PC-9 (cell line): ENCODE measurements at regions of chr10 and their contacts with region 1.

Region 1: DNA sequence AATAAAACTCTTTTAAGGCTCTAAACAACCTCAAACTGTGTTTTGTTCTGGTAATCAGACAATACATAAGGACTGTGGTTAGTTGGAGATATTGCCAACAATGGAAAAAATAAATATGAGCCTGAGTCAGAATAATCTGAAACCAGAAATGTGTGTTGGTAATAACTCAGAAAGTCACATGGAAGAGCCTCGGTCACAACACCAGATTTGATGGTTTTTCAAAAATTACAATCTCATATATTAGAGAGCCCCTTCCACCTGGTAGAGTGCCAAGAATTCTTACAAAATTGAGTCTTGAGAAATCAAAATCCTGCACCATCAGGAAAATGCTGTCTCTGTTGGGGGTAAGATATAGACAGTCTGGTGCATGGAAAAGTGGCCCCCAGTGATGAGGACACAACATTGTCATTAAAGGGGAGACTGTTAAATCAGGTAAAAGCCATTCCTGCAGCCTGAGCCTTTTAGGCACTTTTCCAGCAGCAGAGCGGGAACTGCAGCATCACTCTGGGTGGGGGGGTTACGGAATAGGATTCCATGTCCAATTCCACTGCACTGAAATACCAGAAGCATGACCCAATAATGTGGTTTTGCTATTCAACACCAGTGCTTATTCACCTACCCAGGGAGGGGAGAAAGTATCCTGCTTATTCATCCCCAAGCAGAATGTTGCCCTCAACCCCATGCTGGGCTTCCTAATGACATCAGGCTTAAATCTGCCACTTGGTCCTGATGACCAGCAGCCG is 9.5 kb upstream of the ADAM12 start:
- DNase-seq: peak; percentile 71 to 93
- H3K4me3 ChIP-seq: no peak overlapping the region
- H3K27ac ChIP-seq: peak overlapping the region; percentile 81
- H3K4me1 ChIP-seq: peaks cover 24% of the 10 kb centered on the region
- H3K27me3 ChIP-seq: no peaks in the 10 kb centered on the region
- CTCF ChIP-seq: no peak

Region 2: GRCh38 chr10:126433351-126433750 is 35.5 kb after region 1 on chr10:
- CTCF ChIA-PET with region 1: no interaction called
- POLR2A ChIA-PET with region 1: no interaction called
- intact Hi-C with region 1: loop called (anchors 1 kb)
- DNase-seq: peak; percentile 73 to 88
- H3K4me3 ChIP-seq: no peak overlapping the region
- H3K27ac ChIP-seq: peak overlapping the region; percentile 85
- H3K4me1 ChIP-seq: peaks cover 23% of the 10 kb centered on the region
- H3K27me3 ChIP-seq: no peaks in the 10 kb centered on the region
- CTCF ChIP-seq: no peak

Region 3: GRCh38 chr10:126576336-126576735 is 178.5 kb after region 1 on chr10:
- CTCF ChIA-PET with region 1: no interaction called
- POLR2A ChIA-PET with region 1: no interaction called
- intact Hi-C with region 1: no loop called
- DNase-seq: no peak
- H3K4me3 ChIP-seq: no peak overlapping the region
- H3K27ac ChIP-seq: no peak overlapping the region
- H3K4me1 ChIP-seq: no peaks in the 10 kb centered on the region
- H3K27me3 ChIP-seq: no peaks in the 10 kb centered on the region
- CTCF ChIP-seq: no peak

Region 4: DNA sequence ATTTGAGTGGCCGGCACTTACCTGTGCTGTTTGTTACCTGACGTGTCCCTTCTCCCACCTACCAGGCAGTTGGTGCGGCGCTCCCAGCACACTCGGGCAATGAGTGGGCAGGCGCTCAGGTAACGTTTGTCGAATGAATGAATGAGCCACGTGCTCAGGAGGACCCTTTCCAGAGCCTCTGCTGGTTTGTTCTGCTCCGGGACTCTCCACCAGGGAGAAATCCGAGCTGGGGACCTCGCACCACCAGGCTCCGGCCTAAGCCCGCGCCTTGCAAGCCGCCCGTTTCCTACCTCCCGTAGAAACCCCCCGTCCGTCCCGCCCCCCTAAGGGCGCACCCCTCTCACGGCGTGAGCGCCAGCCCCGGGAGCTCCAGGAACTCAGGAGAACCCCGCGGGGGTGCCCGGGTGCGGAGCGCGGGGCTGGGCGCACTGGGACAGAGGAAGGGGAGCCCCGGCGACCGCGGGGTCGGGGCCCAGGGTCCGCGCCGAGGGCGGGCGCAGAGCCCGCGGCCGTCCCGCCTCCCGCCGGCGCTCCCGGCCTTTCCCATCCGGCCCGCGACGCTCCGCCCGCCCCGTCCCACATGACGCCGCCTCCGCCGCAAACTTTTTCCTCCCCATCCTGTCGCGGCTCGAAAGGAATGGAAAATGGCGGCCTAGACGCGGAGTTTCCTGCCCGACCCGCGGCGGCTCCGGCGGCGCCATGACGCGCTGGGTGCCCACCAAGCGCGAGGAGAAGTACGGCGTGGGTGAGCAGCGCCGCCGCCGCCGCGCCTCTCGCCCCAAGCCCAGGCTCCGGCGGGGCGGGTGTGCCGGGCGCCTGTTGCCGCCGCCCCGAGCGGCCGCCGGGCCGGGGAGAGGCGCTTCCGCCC is 507.2 kb after region 1 on chr10 and contains the start of gene DOCK1:
- CTCF ChIA-PET with region 1: no interaction called
- POLR2A ChIA-PET with region 1: no interaction called
- intact Hi-C with region 1: loop called (anchors 10 kb)
- DNase-seq: peak in 1 of 2 experiments; percentile 52
- H3K4me3 ChIP-seq: peak within 1 kb of the TSS; percentile 73
- H3K27ac ChIP-seq: no peak within 1 kb of the TSS
- H3K4me1 ChIP-seq: peaks cover 27% of the 10 kb centered on the region
- H3K27me3 ChIP-seq: no peaks in the 10 kb centered on the region
- CTCF ChIP-seq: no peak
- total RNA-seq, gene DOCK1: 21.4 and 24.8 TPM in 2 replicates

Region 5: GRCh38 chr10:128000471-128001362 is 1602.9 kb after region 1 on chr10:
- CTCF ChIA-PET with region 1: no interaction called
- POLR2A ChIA-PET with region 1: no interaction called
- intact Hi-C with region 1: loop called (anchors 10 kb)
- DNase-seq: peak in 1 of 2 experiments; percentile 30
- H3K4me3 ChIP-seq: no peak overlapping the region
- H3K27ac ChIP-seq: no peak overlapping the region
- H3K4me1 ChIP-seq: no peaks in the 10 kb centered on the region
- H3K27me3 ChIP-seq: no peaks in the 10 kb centered on the region
- CTCF ChIP-seq: no peak